Tibial artery (tissue), 4 donors: ENCODE measurements at regions of chr14 and their contacts with region 1.

Region 1: DNA sequence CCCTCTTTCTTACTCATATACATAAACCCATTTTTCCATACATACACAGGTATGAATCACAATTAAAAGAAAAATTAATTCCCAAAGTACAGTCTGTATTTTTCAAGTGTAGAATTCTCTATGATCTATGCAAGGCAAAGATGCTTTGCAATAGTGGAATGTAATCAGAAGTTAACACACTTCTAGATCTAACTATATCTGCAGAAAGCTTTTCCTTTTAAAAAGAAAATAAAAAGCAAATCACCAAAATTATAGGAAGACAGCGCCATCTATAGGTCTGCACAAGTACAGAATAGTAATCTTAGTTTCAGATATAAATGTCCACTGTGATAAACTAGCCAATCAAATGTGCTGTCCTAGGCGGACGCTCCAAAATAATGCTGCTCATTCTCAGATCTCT is 22.0 kb downstream of the SLC25A21 start:
- DNase-seq: no peak
- H3K4me3 ChIP-seq: no peak overlapping the region
- H3K27ac ChIP-seq: no peak overlapping the region
- H3K4me1 ChIP-seq: no peaks in the 10 kb centered on the region
- H3K27me3 ChIP-seq: peaks cover 0 to 4% of the 10 kb centered on the region in 2 donors
- CTCF ChIP-seq: peak; percentile 62 to 69

Region 2: DNA sequence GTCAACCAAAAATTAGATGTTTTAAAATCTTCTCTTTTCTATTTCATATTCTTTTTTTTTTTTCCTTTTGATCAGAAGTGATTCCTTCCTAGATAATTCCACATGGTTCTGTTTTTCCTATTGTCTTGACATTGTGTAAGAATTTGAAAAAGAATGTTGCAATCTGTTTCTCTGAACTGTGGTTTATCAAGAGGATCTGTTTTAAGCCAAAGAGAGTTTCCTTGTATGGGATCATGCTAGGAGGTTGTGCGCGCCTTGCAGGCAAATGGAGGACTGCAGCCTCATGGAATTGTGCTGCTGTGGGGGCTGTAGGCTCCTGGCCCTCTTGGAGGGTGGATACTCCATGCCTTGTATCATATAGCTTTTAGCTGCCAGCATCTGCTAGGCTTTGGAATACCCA is 786.7 kb before region 1 on chr14:
- intact Hi-C with region 1: no loop called
- DNase-seq: no peak
- H3K4me3 ChIP-seq: no peak overlapping the region
- H3K27ac ChIP-seq: no peak overlapping the region
- H3K4me1 ChIP-seq: no peaks in the 10 kb centered on the region
- H3K27me3 ChIP-seq: no peaks in the 10 kb centered on the region
- CTCF ChIP-seq: no peak

Region 3: GRCh38 chr14:36553656-36554260 is 596.7 kb before region 1 on chr14:
- intact Hi-C with region 1: loop called (anchors 2 kb)
- DNase-seq: no peak
- H3K4me3 ChIP-seq: no peak overlapping the region
- H3K27ac ChIP-seq: no peak overlapping the region
- H3K4me1 ChIP-seq: no peaks in the 10 kb centered on the region
- H3K27me3 ChIP-seq: peaks cover 0 to 10% of the 10 kb centered on the region in 2 donors
- CTCF ChIP-seq: peak; percentile 45 to 46

Region 4: GRCh38 chr14:36647824-36648753 is 502.3 kb before region 1 on chr14:
- intact Hi-C with region 1: loop called (anchors 5 kb)
- DNase-seq: peak in 1 of 2 donors; percentile 67
- H3K4me3 ChIP-seq: peak overlapping the region; percentile 45 to 47
- H3K27ac ChIP-seq: no peak overlapping the region
- H3K4me1 ChIP-seq: peaks cover 0 to 21% (median 18%) of the 10 kb centered on the region in 4 donors
- H3K27me3 ChIP-seq: peaks cover 3 to 75% of the 10 kb centered on the region in 2 donors
- CTCF ChIP-seq: peak; percentile 39 to 51

Region 5: GRCh38 chr14:36941783-36942521 is 208.5 kb before region 1 on chr14:
- intact Hi-C with region 1: no loop called
- DNase-seq: peak; percentile 59 to 68
- H3K4me3 ChIP-seq: no peak overlapping the region
- H3K27ac ChIP-seq: no peak overlapping the region
- H3K4me1 ChIP-seq: no peaks in the 10 kb centered on the region
- H3K27me3 ChIP-seq: no peaks in the 10 kb centered on the region
- CTCF ChIP-seq: peak; percentile 72 to 94

Region 6: DNA sequence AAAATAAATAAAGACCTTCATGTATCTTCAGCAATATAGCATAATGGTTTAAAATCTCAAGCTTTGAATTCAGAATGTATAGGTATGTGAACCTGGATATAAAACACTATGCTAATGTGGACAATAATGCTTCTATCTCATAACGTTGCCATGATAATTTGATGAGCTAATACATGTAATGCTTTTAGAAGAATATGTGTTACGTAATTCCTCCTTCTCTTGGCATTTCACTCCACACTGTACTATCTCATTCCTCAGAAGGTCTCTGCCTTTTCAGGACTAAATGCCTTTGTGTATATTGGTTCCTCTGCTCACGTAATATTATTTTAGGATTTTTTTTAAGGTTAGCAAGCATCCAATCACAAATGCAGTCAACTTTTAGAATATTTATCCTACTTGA is 358.1 kb after region 1 on chr14:
- intact Hi-C with region 1: no loop called
- DNase-seq: no peak
- H3K4me3 ChIP-seq: no peak overlapping the region
- H3K27ac ChIP-seq: no peak overlapping the region
- H3K4me1 ChIP-seq: no peaks in the 10 kb centered on the region
- H3K27me3 ChIP-seq: no peaks in the 10 kb centered on the region
- CTCF ChIP-seq: no peak